PC-3 (cell line): ENCODE measurements at regions of chr11 and their contacts with region 1.

Region 1: DNA sequence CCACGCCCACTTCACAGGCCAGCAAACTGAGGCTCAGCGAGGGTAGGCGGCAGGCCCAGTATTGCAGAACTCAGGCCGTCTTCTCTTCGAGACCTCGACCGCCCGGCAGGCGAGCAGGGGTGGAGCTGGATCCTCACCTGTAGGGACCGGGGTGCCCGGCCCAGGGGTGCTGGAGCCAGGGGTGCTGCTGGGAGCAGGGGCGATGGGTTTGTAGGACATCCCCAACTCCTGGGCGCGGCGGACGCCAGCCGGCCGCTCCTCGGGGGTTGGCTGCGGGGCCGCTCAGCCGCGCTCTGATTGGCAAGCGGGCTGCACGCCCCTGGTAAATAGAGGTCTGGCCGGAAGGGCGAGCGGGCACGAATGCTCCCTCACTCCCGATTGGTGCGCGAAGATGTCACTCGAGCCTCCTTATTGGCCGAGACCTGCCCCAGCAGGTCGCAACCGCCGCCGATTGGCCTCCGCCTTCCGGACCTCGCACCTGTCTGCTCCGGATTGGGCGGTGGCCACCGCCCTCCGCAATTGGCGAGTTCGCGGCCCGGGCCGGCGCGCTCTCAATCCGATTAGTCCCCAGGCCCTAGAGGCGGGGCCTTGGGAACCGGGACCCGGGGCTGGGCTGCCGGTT is at the start of gene CDK2AP2:
- DNase-seq: peak; percentile 100
- ATAC-seq: peak; percentile 72
- H3K4me3 ChIP-seq: peak within 1 kb of the TSS; percentile 76
- H3K27ac ChIP-seq: peak within 1 kb of the TSS; percentile 85
- H3K4me1 ChIP-seq: peaks cover 33% of the 10 kb centered on the region
- H3K27me3 ChIP-seq: no peaks in the 10 kb centered on the region
- CTCF ChIP-seq: no peak
- total RNA-seq, gene CDK2AP2: 74.9 and 87.4 TPM in 2 replicates

Region 2: GRCh38 chr11:67230406-67230805 is 277.6 kb before region 1 on chr11:
- CTCF ChIA-PET with region 1: no interaction called
- POLR2A ChIA-PET with region 1: no interaction called
- intact Hi-C with region 1: no loop called
- DNase-seq: peak; percentile 54
- ATAC-seq: peak; percentile 49
- H3K4me3 ChIP-seq: no peak overlapping the region
- H3K27ac ChIP-seq: 0 out of 2 replicates have a peak overlapping the region, but pooled peaks have one; percentile 22
- H3K4me1 ChIP-seq: peaks cover 8% of the 10 kb centered on the region
- H3K27me3 ChIP-seq: no peaks in the 10 kb centered on the region
- CTCF ChIP-seq: no peak

Region 3: GRCh38 chr11:67345920-67346799 is 161.8 kb before region 1 on chr11:
- CTCF ChIA-PET with region 1: no interaction called
- POLR2A ChIA-PET with region 1: no interaction called
- intact Hi-C with region 1: loop called (anchors 1 kb)
- DNase-seq: peak; percentile 99
- ATAC-seq: peak; percentile 92
- H3K4me3 ChIP-seq: peak overlapping the region; percentile 26; the same call in 1 of the 2 replicates
- H3K27ac ChIP-seq: peak overlapping the region; percentile 95
- H3K4me1 ChIP-seq: peaks cover 38% of the 10 kb centered on the region
- H3K27me3 ChIP-seq: no peaks in the 10 kb centered on the region
- CTCF ChIP-seq: peak; percentile 99

Region 4: DNA sequence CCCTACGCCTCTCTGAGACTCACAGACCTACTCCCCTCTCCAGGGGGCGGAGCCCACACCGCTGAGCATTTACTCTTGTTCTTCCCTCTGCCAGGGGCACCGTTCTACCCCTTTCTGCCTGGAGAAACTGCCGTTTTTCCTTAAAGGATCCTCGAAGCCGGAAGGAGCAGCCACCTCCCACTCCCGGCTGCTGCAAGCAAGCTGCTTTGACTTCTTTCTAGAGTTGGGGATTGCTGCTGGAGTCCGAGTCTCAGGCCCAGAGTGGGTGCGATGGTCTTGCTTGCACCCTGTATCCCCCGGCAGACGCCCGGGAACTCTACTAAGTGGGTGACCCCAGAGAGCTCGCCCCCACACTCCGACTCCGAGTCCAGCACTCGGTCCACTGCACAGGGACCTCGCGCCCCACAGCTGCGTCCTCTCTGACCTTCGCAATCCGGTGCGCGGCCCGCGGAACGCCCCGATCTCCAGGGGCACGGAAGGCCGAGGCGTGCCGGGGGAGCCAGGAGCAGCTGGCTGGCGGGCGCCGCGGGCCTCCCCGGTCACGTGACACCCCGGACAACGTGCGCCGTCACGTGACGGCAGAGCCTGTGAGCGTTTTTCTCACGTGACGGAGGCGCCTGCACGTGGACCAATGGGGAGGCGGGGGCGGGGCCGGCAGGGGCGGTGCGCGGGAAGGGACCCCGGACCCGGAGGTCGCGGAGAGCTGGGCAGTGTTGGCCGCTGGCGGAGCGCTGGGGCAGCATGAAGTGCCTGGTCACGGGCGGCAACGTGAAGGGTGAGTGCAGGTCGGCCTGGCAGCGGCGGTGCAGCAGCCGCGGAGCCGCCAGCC is 116.5 kb before region 1 on chr11 and contains the start of gene RAD9A:
- CTCF ChIA-PET with region 1: no interaction called
- POLR2A ChIA-PET with region 1: no interaction called
- intact Hi-C with region 1: loop called (anchors 2 kb)
- DNase-seq: peak; percentile 97
- ATAC-seq: peak; percentile 66
- H3K4me3 ChIP-seq: peak within 1 kb of the TSS; percentile 81
- H3K27ac ChIP-seq: peak within 1 kb of the TSS; percentile 81
- H3K4me1 ChIP-seq: peaks cover 8% of the 10 kb centered on the region; the same call in 1 of the 2 replicates
- H3K27me3 ChIP-seq: no peaks in the 10 kb centered on the region
- CTCF ChIP-seq: no peak
- total RNA-seq, gene RAD9A: 45.5 and 48.9 TPM in 2 replicates

Region 5: GRCh38 chr11:67442504-67443405 is 65.2 kb before region 1 on chr11:
- CTCF ChIA-PET with region 1: no interaction called
- POLR2A ChIA-PET with region 1: no interaction called
- intact Hi-C with region 1: loop called (anchors 1 kb)
- DNase-seq: peak; percentile 29
- ATAC-seq: peak; percentile 23
- H3K4me3 ChIP-seq: peak overlapping the region; percentile 82
- H3K27ac ChIP-seq: peak overlapping the region; percentile 31
- H3K4me1 ChIP-seq: 0 out of 2 replicates have a peak, but pooled peaks cover 6% of the 10 kb centered on the region
- H3K27me3 ChIP-seq: no peaks in the 10 kb centered on the region
- CTCF ChIP-seq: no peak

Region 6: GRCh38 chr11:67482825-67483798 is 24.9 kb before region 1 on chr11 and contains the start of gene AIP:
- CTCF ChIA-PET with region 1: no interaction called
- POLR2A ChIA-PET with region 1: no interaction called
- intact Hi-C with region 1: loop called (anchors 2 kb)
- DNase-seq: peak; percentile 100
- ATAC-seq: peak; percentile 99
- H3K4me3 ChIP-seq: peak within 1 kb of the TSS; percentile 73
- H3K27ac ChIP-seq: no peak within 1 kb of the TSS; the same call in 1 of the 2 replicates
- H3K4me1 ChIP-seq: peaks cover 15% of the 10 kb centered on the region
- H3K27me3 ChIP-seq: no peaks in the 10 kb centered on the region
- CTCF ChIP-seq: no peak
- total RNA-seq, gene AIP: 155 and 171 TPM in 2 replicates

Region 7: GRCh38 chr11:67606492-67607201 is 98.7 kb after region 1 on chr11 and contains the start of gene NDUFV1:
- CTCF ChIA-PET with region 1: no interaction called
- POLR2A ChIA-PET with region 1: no interaction called
- intact Hi-C with region 1: loop called (anchors 1 kb)
- DNase-seq: peak; percentile 98
- ATAC-seq: peak; percentile 99
- H3K4me3 ChIP-seq: peak within 1 kb of the TSS; percentile 92
- H3K27ac ChIP-seq: no peak within 1 kb of the TSS
- H3K4me1 ChIP-seq: peaks cover 16% of the 10 kb centered on the region; the same call in 1 of the 2 replicates
- H3K27me3 ChIP-seq: no peaks in the 10 kb centered on the region
- CTCF ChIP-seq: peak; percentile 63
- total RNA-seq, gene NDUFV1: 499 and 686 TPM in 2 replicates